Activated T-helper 1 cell treated with anti-CD3 and anti-CD28 coated beads, Interleukin-12 subunit alpha, Interleukin-12 subunit beta, Interleukin-2, Interleukin-4 antibody, amounts not matched to agents 30 ng/mL and 10 ng/mL and 1 ng/mL, durations not matched to agents 14 hours and 24 hours and 36 hours (primary cell): ENCODE measurements at regions of chr5 and their contacts with region 1.

Region 1: GRCh38 chr5:176619203-176619568 is 9.2 kb upstream of the GPRIN1 start:
- DNase-seq: peak; percentile 75
- H3K4me3 Mint-ChIP-seq: no peak overlapping the region
- H3K27ac Mint-ChIP-seq: no peak overlapping the region
- H3K4me1 Mint-ChIP-seq: peaks cover 7% of the 10 kb centered on the region
- H3K27me3 Mint-ChIP-seq: peaks cover 67% of the 10 kb centered on the region

Region 2: GRCh38 chr5:176573564-176574296 is 45.5 kb before region 1 on chr5:
- intact Hi-C with region 1: loop called (anchors 1 kb)
- DNase-seq: peak; percentile 58
- H3K4me3 Mint-ChIP-seq: no peak overlapping the region
- H3K27ac Mint-ChIP-seq: no peak overlapping the region
- H3K4me1 Mint-ChIP-seq: no peaks in the 10 kb centered on the region
- H3K27me3 Mint-ChIP-seq: peaks cover 5% of the 10 kb centered on the region

Region 3: DNA sequence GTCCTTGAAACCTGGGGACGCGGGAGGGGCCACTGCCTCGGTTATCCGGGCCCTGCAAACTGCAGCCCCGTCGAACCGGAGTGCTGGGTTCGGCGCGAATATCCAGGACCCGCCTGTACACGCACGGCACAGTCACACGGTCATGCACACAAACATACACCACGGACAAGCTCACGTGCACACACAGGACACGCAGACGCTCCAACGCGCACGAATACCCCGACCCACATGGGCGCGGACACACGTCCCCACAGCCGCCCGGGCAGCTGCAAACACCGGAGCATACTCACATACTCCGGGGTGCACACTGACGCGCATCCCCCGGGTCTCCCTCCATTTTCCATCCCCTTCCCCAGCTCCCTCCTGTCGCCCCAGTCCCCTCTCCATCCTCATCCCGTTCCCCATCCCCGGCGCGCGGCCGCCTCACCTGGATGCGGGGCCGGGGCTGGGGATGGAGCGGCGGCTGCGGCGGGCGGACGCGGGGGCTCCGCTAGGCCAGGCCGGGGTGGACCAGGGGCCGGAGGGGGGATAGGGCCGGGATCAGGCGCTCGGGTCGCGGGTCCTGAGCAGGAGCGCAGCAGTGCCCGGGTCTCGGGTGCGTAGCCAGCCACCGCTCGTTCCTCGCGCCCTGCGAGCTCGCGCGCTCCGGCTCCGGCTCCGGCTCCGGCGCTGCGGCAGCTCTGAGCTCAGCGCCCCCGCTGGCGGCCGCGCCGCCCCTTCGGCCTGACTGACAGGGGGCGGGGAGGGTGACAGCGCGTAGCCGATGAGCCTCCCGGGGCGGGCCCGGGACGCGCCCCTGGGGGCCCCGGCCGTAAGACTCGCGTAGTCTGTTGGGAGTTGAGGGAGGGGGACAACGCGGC is 10.9 kb after region 1 on chr5 and contains the starts of genes EIF4E1B and SNCB:
- intact Hi-C with region 1: loop called (anchors 1 kb)
- DNase-seq: peak; percentile 31
- H3K4me3 Mint-ChIP-seq: peak within 1 kb of the TSS; percentile 28
- H3K27ac Mint-ChIP-seq: no peak within 1 kb of the TSS
- H3K4me1 Mint-ChIP-seq: peaks cover 14% of the 10 kb centered on the region
- H3K27me3 Mint-ChIP-seq: peaks cover 80% of the 10 kb centered on the region
- total RNA-seq, gene EIF4E1B: not detected in 2 replicates
- total RNA-seq, gene SNCB: not detected in 2 replicates